SK-N-SH (cell line): ENCODE measurements at regions of chr5 and their contacts with region 1.

Region 1: GRCh38 chr5:97231025-97231636 is 48.1 kb upstream of the RIOK2 start:
- DNase-seq: peak; percentile 44
- H3K4me3 ChIP-seq: no peak overlapping the region; a peak in 1 of 4 replicates
- H3K27ac ChIP-seq: no peak overlapping the region
- H3K4me1 ChIP-seq: no peaks in the 10 kb centered on the region
- H3K27me3 ChIP-seq: no peaks in the 10 kb centered on the region
- CTCF ChIP-seq: peak; percentile 93
- EP300 ChIP-seq: no peak
- RAD21 ChIP-seq: peak; percentile 83

Region 2: GRCh38 chr5:97078958-97079743 is 152.0 kb before region 1 on chr5:
- CTCF ChIA-PET with region 1: no interaction called
- POLR2A ChIA-PET with region 1: no interaction called
- DNase-seq: no peak
- H3K4me3 ChIP-seq: no peak overlapping the region
- H3K27ac ChIP-seq: no peak overlapping the region
- H3K4me1 ChIP-seq: no peaks in the 10 kb centered on the region
- H3K27me3 ChIP-seq: no peaks in the 10 kb centered on the region
- CTCF ChIP-seq: no peak
- EP300 ChIP-seq: no peak
- RAD21 ChIP-seq: no peak

Region 3: DNA sequence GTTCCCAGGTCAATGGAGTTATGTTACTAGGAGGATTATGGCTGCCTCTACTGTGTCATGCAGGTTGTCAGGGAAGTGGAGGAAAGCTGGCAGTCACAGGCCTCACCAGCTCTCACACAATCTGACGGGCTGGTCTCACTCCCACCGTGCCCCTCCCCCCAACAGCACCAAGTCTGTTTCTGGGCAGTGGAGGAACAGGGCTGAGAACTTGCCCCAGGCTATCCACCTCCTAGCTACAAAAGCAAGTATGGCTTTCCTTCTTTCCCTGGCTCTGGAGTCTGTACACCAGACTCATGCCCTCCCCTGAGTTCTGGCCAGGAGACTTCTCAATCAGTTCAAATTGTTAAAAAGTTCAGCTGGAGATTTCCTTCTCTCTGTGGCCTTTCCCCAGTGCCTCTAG is 22.4 kb before region 1 on chr5:
- CTCF ChIA-PET with region 1: interaction called, 10 read pairs
- POLR2A ChIA-PET with region 1: no interaction called
- DNase-seq: no peak
- H3K4me3 ChIP-seq: no peak overlapping the region
- H3K27ac ChIP-seq: no peak overlapping the region
- H3K4me1 ChIP-seq: no peaks in the 10 kb centered on the region
- H3K27me3 ChIP-seq: no peaks in the 10 kb centered on the region
- CTCF ChIP-seq: no peak
- EP300 ChIP-seq: no peak
- RAD21 ChIP-seq: no peak

Region 4: DNA sequence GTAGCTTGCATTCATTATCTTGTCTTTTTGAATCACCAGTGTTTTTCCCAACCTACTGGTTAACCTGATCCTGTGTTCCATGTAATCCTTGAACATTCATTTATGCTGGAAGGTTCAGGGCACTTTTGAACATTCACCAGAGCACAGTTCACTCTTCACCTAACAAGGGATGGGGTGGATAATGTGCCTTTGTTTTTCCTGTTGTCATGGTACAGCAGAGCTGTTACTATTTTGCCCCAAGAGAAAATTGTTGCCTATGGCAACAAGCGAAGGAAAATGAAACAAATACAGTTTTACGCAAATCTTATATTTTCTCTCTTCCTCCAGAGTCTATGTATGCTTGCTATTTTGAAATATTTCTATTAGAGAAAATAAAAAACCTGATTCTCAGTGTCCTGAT is 12.2 kb after region 1 on chr5:
- CTCF ChIA-PET with region 1: interaction called, 18 read pairs
- POLR2A ChIA-PET with region 1: no interaction called
- DNase-seq: no peak
- H3K4me3 ChIP-seq: no peak overlapping the region
- H3K27ac ChIP-seq: no peak overlapping the region
- H3K4me1 ChIP-seq: no peaks in the 10 kb centered on the region
- H3K27me3 ChIP-seq: no peaks in the 10 kb centered on the region
- CTCF ChIP-seq: no peak
- EP300 ChIP-seq: no peak
- RAD21 ChIP-seq: no peak

Region 5: GRCh38 chr5:97250113-97250512 is 19.0 kb after region 1 on chr5:
- CTCF ChIA-PET with region 1: interaction called, 13 read pairs
- POLR2A ChIA-PET with region 1: no interaction called
- DNase-seq: no peak
- H3K4me3 ChIP-seq: no peak overlapping the region
- H3K27ac ChIP-seq: no peak overlapping the region
- H3K4me1 ChIP-seq: no peaks in the 10 kb centered on the region
- H3K27me3 ChIP-seq: no peaks in the 10 kb centered on the region
- CTCF ChIP-seq: no peak
- EP300 ChIP-seq: no peak
- RAD21 ChIP-seq: no peak

Region 6: GRCh38 chr5:97534166-97534565 is 303.0 kb after region 1 on chr5:
- CTCF ChIA-PET with region 1: interaction called, 23 read pairs
- POLR2A ChIA-PET with region 1: no interaction called
- DNase-seq: peak; percentile 41
- H3K4me3 ChIP-seq: no peak overlapping the region
- H3K27ac ChIP-seq: no peak overlapping the region
- H3K4me1 ChIP-seq: peaks cover 0 to 6% of the 10 kb centered on the region in 2 experiments; a peak in 2 of 4 replicates
- H3K27me3 ChIP-seq: no peaks in the 10 kb centered on the region
- CTCF ChIP-seq: peak; percentile 72
- EP300 ChIP-seq: no peak
- RAD21 ChIP-seq: peak; percentile 65

Region 7: DNA sequence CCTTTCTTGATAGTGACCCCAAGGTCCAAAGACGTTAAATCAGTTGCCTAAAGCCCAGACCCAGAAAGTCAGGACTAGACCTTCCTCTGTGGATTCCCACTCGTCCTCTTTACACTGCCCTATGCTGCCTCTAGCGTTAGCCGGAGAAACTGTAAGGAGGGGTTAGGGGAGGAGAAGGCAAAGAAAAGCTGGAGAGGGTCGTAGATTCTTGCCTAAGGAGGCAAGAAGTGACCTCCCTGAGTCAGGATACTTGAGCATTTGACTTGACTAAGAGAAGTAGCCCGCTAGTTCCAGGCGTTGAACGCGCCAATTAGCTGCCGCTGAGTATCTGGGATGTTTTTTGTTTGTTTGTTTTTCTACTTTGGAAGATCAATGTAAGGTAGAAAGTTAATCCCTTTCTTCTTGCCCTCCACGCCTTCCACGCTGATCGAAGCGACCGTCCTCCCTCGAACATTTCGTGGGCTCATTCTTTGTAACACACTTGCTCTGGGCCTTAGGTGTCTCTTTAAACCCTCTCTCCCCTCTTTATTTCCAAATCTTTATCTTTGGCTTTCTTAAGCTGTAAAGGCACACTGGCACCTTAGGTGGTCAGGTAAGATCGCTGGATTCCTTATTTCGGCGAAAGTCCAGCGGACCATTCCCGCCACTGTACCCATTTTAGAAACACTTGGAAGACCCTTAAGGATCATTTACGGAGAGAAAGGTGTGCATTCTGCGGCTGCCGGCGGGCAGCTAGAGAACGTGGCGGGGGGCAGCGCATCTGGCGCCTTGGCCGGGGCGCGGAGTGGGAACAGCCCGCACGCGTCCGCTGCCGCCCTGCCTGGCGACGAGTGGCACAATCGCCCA is 1537.3 kb after region 1 on chr5:
- CTCF ChIA-PET with region 1: interaction called, 28 read pairs
- POLR2A ChIA-PET with region 1: no interaction called
- DNase-seq: peak; percentile 73
- H3K4me3 ChIP-seq: peak overlapping the region; percentile 83 to 90
- H3K27ac ChIP-seq: peak overlapping the region; percentile 66 to 96
- H3K4me1 ChIP-seq: peaks cover 9 to 11% of the 10 kb centered on the region in 2 experiments; a peak in 3 of 4 replicates
- H3K27me3 ChIP-seq: no peaks in the 10 kb centered on the region
- CTCF ChIP-seq: peak; percentile 97
- EP300 ChIP-seq: no peak
- RAD21 ChIP-seq: peak; percentile 81

Region 8: DNA sequence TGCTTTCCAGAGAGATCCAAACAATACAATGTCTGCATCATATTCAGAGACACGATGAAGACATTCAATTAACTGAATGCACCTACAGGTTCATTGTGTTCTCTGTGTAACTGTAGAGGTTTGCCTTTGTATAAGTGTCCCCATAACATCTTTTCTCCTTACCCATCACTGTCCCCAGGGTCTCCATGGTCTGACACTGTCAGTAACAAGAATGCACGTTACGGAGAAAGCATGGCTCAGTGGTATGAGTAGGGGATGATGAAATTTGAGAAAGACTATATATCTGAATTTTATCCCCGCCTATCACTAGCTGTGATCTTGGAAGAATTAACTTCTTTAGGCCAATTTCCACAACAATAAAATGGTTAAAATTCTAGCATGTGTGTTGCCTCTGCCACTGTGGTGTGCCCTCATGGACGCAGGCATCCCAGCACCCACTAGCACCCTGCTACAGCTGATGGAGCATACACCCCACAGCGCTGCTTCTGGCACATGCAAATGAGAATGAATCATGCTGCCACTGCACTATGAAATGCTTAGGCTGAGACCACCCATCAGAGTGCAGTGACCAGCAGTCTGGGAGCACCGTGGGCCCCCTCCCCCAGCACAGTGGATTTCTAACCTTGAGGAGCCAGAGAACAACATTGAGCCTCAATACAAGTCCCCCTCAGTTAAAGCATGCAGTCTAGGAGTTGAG is 1596.6 kb after region 1 on chr5:
- CTCF ChIA-PET with region 1: interaction called, 10 read pairs
- POLR2A ChIA-PET with region 1: no interaction called
- DNase-seq: no peak
- H3K4me3 ChIP-seq: no peak overlapping the region
- H3K27ac ChIP-seq: no peak overlapping the region
- H3K4me1 ChIP-seq: no peaks in the 10 kb centered on the region
- H3K27me3 ChIP-seq: no peaks in the 10 kb centered on the region
- CTCF ChIP-seq: no peak
- EP300 ChIP-seq: no peak
- RAD21 ChIP-seq: no peak